ENCODE measurements at regions of chr1 and their contacts with region 1.

Region 1: GRCh38 chr1:228457396-228458176 is 29.6 kb upstream of the RNF187 start:
- H3K4me3 ChIP-seq: peak overlapping the region; percentile 85
- H3K27ac ChIP-seq: peak overlapping the region; percentile 70
- H3K4me1 ChIP-seq: peaks cover 6% of the 10 kb centered on the region; the same call in 1 of the 2 replicates
- CTCF ChIP-seq: peak; percentile 99

Region 2: DNA sequence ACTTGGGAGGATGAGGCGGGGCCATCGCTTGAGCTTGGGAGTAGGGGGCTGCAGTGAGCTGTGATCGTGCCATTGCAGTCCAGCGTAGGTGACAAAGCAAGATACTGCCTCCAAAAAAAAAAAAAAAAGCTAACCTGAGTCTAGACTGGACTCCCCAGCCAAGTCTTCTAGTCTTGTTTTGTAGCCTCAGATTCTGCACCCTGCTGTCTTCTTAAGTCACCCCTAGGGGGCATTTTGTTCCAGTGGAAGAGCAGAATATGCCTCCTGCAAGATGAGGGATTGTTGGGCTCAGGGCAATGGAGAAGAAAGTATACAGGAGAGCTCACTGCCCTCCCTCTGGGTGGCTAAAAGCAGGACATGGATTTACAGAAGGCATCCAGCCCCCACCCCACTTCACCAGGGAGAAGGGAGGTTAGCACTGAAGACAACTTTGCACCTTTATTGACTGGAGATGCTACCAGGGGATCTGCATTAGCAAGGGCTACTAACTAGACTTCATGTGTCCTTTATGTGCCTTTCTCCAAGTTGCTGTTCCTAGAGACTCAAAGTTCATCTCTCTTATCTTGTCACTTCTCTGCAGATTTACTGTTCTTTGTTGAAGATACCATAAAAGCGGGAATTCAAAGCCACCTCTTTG is 14.3 kb after region 1 on chr1:
- CTCF ChIA-PET with region 1: interaction called, 22 read pairs
- POLR2A ChIA-PET with region 1: interaction called, 4 read pairs
- H3K4me3 ChIP-seq: no peak overlapping the region
- H3K27ac ChIP-seq: no peak overlapping the region
- H3K4me1 ChIP-seq: no peaks in the 10 kb centered on the region
- CTCF ChIP-seq: peak; percentile 50; the same call in 1 of the 2 replicates

Region 3: GRCh38 chr1:228691926-228692325 is 234.3 kb after region 1 on chr1:
- CTCF ChIA-PET with region 1: no interaction called
- POLR2A ChIA-PET with region 1: no interaction called
- H3K4me3 ChIP-seq: no peak overlapping the region
- H3K27ac ChIP-seq: no peak overlapping the region
- H3K4me1 ChIP-seq: peaks cover 7% of the 10 kb centered on the region
- CTCF ChIP-seq: peak; percentile 24; the same call in 1 of the 2 replicates

Region 4: GRCh38 chr1:228706305-228706704 is 248.7 kb after region 1 on chr1:
- CTCF ChIA-PET with region 1: no interaction called
- POLR2A ChIA-PET with region 1: no interaction called
- H3K4me3 ChIP-seq: no peak overlapping the region
- H3K27ac ChIP-seq: no peak overlapping the region
- H3K4me1 ChIP-seq: no peaks in the 10 kb centered on the region
- CTCF ChIP-seq: no peak

Measured in HEK293 (cell line).